Activated B cell treated with CpG ODN at 0.5 μM for 24 hours (primary cell): ENCODE measurements at regions of chr14 and their contacts with region 1.

Region 1: DNA sequence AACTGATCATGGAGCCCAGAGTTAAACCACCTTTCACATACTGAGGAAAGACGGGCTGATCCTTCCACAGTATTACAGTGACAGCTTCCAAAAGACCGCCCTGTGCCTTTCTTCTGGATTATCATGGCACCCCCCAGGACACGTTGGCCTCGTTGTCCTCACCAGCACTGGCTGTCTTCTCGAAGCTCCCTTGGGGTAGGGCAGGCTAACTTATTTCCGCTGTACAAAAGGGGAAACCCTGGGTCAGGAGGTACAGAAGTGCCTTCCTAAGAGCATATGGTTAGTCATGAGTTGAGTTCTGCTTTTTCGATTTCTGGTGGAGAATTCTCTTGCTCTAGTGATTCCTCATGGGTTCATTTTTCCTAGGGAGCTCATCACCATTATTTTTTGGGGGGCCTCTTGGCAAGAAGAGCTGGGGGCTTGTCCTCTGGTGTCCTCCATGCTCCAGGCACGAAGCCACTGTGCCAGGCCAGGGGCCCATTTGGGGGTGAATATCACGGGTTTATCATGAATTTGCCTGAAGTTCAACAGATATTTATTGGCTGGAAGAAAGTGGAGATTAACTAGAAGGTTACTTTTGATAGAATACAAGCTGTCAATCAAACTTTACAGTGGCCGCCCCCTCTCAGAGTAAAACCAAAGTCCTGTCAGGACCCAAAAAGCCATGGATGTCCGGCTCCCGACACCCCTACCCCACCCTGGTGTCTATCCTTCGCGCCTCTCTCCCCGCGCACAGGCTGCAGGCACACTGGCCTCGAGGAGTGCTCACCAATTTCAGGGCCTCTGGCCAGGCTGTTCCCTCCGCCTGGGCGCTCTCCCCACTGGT is 8.8 kb upstream of the TRAF3 start:
- DNase-seq: peak; percentile 46
- ATAC-seq: peak; percentile 86
- H3K4me3 Mint-ChIP-seq: peak overlapping the region; percentile 68
- H3K27ac Mint-ChIP-seq: peak overlapping the region; percentile 97
- H3K4me1 Mint-ChIP-seq: peaks cover 85% of the 10 kb centered on the region
- H3K27me3 Mint-ChIP-seq: no peaks in the 10 kb centered on the region
- CTCF ChIP-seq: no peak

Region 2: GRCh38 chr14:102754370-102755262 is 13.8 kb before region 1 on chr14:
- CTCF ChIA-PET with region 1: no interaction called
- POLR2A ChIA-PET with region 1: interaction called, 14 read pairs
- intact Hi-C with region 1: loop called (anchors 1 kb)
- DNase-seq: peak; percentile 39
- ATAC-seq: peak; percentile 80
- H3K4me3 Mint-ChIP-seq: peak overlapping the region; percentile 74
- H3K27ac Mint-ChIP-seq: peak overlapping the region; percentile 88
- H3K4me1 Mint-ChIP-seq: peaks cover 53% of the 10 kb centered on the region
- H3K27me3 Mint-ChIP-seq: no peaks in the 10 kb centered on the region
- CTCF ChIP-seq: no peak

Region 3: DNA sequence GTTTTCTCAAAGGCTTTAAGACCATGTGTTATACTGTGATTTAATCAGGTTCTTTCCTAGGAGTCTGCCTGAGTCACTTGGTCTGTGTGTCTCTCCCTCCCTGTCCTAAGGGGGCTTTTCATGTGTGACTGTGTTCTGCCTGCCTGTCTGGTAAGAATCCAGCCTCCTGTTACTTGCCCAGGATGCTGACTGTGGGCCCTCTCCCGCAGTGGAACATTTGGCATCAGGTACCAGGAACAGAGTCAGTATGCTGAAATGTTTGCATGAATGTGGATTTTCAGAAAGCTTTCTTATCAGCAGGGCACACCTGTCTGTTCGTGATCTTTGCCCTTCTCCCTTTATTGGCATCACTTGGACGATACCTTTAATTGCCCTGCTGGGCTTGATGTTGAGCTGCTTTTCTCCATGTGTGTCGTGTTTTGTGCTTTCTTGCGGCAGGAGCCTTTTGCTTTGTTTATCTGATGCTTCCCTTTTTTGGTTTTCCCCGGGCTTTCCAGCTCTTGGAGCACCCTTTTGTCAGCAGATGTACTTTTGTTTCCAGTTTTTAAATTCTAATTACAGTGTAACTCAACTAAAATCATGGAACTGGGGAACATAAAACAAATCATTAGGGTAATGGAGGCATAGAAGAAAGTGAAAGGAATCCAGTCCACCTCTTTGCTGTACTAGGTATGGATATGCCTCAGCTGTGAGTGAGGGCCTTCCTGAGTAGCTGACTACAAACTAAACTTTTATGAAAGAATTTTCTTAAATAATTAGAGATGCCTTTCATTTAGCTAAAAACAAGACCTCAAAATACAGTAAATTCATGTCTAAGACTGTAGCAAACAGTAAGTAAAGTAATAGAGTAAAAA is 81.3 kb after region 1 on chr14:
- CTCF ChIA-PET with region 1: no interaction called
- POLR2A ChIA-PET with region 1: interaction called, 10 read pairs
- intact Hi-C with region 1: no loop called
- DNase-seq: no peak
- ATAC-seq: no peak
- H3K4me3 Mint-ChIP-seq: peak overlapping the region; percentile 42
- H3K27ac Mint-ChIP-seq: peak overlapping the region; percentile 76
- H3K4me1 Mint-ChIP-seq: peaks cover 26% of the 10 kb centered on the region
- H3K27me3 Mint-ChIP-seq: no peaks in the 10 kb centered on the region
- CTCF ChIP-seq: no peak

Region 4: DNA sequence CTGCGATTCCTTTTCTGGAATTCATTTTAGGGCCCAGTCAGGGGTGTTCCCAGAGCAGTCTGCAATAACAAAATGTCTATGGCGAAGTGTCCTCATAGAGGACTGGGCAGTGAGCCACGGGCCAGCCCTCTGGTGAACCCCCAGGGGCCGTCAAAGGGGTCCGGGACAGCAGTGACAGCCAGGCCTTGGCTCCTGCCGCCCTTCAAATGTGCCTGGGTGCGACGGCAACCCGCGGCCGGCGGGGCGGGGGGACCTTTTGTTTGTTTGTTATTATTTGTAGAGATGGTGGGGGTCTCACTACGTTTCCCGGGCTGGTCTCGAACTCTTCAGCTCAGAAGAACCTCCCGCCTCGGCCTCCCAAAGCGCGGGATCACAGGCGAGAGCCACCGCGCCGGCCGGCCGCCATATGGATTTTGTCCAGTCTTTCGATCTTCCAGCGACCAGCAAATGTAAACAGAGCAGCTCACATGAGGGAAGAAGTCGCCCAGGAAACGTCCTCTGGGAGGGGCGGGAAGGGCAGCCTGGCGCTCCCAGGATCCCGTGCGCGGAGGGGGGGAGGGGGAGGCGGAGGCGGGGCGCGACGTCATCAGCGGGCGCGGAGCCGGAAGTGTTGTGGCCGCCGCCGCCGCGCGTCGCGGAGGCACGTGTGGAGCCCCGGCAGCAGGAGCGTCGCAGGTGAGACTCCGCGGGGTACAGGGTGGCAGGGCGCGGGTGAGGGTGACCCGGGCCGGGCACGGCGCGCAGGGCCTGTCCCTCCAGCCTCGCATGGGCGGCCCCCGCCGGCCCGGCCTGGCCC is 760.3 kb after region 1 on chr14 and contains the start of gene TRMT61A:
- CTCF ChIA-PET with region 1: no interaction called
- POLR2A ChIA-PET with region 1: no interaction called
- intact Hi-C with region 1: loop called (anchors 10 kb)
- DNase-seq: peak; percentile 65
- ATAC-seq: peak; percentile 26
- H3K4me3 Mint-ChIP-seq: peak within 1 kb of the TSS; percentile 92
- H3K27ac Mint-ChIP-seq: peak within 1 kb of the TSS; percentile 96
- H3K4me1 Mint-ChIP-seq: peaks cover 62% of the 10 kb centered on the region
- H3K27me3 Mint-ChIP-seq: no peaks in the 10 kb centered on the region
- CTCF ChIP-seq: no peak
- total RNA-seq, gene TRMT61A: 19.4 and 21.8 TPM in 2 replicates